Sciatic nerve (tissue), 2 donors: ENCODE measurements at regions of chr2 and their contacts with region 1.

Region 1: GRCh38 chr2:179626261-179626660 is 235.2 kb downstream of the ZNF385B start:
- DNase-seq: no peak
- ATAC-seq: no peak

Region 2: DNA sequence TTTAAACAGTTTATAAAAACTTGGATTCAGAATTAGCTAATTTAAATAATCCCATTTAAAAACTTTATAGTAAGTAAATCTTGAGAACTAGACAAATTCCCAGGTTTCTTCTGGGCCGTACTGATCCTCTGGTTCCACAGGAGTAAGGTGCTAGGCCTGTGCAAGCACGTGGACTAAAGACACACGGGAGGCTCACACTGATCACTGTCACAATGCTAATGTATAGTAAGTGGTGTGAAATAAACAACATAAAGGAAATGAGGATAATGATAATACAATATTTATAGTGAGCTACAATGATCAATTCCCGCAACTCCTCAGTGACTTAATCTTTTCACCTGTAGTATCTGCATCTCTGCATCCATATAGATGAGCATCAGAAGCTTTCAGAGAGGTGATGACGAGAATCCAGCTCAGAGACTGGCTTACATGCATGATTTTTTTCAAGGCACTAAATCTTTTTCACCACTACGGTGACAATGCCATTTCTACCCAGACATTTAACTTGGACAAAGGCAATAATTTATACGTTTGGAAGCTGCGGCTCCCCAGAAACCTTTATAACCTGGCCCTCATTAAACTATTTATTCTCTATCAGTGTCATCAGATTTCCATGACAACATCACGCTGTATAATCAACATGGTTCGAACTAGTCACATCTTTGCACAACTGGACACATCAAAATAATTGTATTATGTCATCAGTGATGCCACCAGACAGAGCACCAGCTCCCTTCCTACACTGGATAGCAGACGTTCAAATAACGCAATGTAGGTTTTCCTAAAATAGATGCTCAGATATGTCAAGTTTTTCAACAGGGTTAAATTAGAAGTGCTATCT is 38.9 kb after region 1 on chr2:
- intact Hi-C with region 1: loop called (anchors 1 kb)
- DNase-seq: no peak
- ATAC-seq: no peak

Region 3: DNA sequence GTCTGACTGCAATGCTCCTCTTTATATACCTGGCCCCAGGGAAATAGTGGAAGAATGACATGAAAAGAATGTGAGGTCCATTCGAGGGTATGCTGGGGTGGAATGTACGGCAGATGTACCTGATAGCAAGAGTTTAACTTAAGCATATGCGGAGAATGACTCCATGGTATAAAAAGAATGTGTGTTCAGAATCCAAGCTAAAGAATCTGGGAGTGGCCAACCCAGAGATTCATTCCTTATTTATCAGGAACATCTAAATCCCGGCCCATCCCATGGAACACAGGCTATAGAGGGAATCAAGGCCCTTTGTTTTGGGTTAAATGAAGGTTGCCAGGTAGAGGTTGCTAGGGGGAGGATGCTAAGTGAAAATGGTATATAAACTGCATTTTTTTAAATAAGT is 85.1 kb after region 1 on chr2:
- intact Hi-C with region 1: no loop called
- DNase-seq: no peak
- ATAC-seq: no peak